Lower leg skin (tissue), 4 donors: ENCODE measurements at regions of chr2 and their contacts with region 1.

Region 1: GRCh38 chr2:164928101-164928673 is 27.1 kb downstream of the SLC38A11 start:
- DNase-seq: no peak
- H3K4me3 ChIP-seq: no peak overlapping the region
- CTCF ChIP-seq: no peak
- POLR2A ChIP-seq: no peak

Region 2: DNA sequence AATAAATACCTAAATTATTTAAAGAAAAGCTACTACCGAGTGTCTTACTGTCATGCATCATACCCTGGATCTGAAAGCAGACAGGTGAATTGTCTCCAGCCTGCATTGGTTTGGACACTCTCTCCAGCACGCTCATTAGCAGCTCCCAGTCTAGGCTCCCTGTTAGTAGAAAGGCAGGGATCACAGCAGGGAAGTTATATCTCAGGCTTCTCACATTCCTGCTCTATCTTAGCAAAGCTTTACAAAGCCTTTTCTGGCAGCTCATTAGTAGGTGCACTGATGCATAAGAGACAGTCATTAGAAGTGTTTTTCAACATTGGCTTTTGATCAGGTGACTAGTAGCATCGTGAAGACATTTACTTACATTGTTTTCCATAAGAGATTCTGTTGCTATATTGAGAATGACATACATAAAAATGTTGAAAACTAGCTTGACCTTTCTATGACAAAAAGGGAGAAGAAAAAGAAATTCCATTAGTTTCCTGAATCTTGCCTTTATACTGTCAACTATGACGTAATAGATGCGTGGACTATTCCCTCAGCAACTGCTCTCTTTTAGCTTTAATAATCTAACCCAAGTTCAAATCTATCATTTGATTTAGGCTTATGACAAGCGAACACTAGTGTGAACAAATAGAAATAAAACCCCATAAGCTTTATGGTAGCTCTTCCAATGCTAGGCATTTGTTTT is 1680.9 kb before region 1 on chr2:
- intact Hi-C with region 1: loop called (anchors 5 kb)
- DNase-seq: no peak
- H3K4me3 ChIP-seq: no peak overlapping the region
- CTCF ChIP-seq: no peak
- POLR2A ChIP-seq: no peak

Region 3: DNA sequence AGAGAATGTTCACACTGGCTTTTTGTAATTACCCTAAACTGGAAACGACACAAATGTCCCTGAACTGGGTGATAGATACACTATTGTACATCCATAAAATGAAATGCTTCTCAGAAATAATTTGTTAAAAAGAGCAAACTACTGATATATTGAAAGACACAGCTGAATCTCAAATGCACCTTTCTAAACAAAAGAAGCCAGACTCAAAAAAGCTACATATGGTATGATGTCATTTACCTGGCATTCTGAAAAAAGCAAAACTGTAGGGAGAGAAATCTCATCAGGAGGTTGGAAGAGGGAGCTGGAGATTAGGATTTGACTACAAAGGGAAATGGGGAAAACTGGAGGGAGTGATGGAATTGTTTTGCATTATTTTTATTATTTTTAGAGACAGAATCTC is 15.1 kb after region 1 on chr2:
- intact Hi-C with region 1: no loop called
- DNase-seq: no peak
- H3K4me3 ChIP-seq: no peak overlapping the region
- CTCF ChIP-seq: no peak
- POLR2A ChIP-seq: no peak

Region 4: GRCh38 chr2:164967781-164968228 is 39.6 kb after region 1 on chr2:
- intact Hi-C with region 1: no loop called
- DNase-seq: no peak
- H3K4me3 ChIP-seq: no peak overlapping the region
- CTCF ChIP-seq: no peak
- POLR2A ChIP-seq: no peak